Gastrocnemius medialis (tissue), 4 donors: ENCODE measurements at regions of chr7 and their contacts with region 1.

Region 1: GRCh38 chr7:96949766-96950165 is 55.6 kb upstream of the DLX6 start:
- DNase-seq: no peak
- ATAC-seq: no peak
- H3K4me3 ChIP-seq: no peak overlapping the region
- H3K27ac ChIP-seq: no peak overlapping the region
- H3K4me1 ChIP-seq: no peaks in the 10 kb centered on the region
- H3K27me3 ChIP-seq: no peaks in the 10 kb centered on the region
- CTCF ChIP-seq: no peak
- POLR2A ChIP-seq: no peak

Region 2: GRCh38 chr7:96327429-96327828 is 622.3 kb before region 1 on chr7:
- in situ Hi-C with region 1: no loop called
- intact Hi-C with region 1: no loop called
- DNase-seq: no peak
- ATAC-seq: no peak
- H3K4me3 ChIP-seq: no peak overlapping the region
- H3K27ac ChIP-seq: peak overlapping the region in 1 of 4 donors; percentile 22
- H3K4me1 ChIP-seq: peaks cover 11 to 12% of the 10 kb centered on the region in 2 donors
- H3K27me3 ChIP-seq: no peaks in the 10 kb centered on the region
- CTCF ChIP-seq: no peak
- POLR2A ChIP-seq: no peak

Region 3: GRCh38 chr7:96778263-96778662 is 171.5 kb before region 1 on chr7:
- in situ Hi-C with region 1: no loop called
- intact Hi-C with region 1: no loop called
- DNase-seq: no peak
- ATAC-seq: no peak
- H3K4me3 ChIP-seq: no peak overlapping the region
- H3K27ac ChIP-seq: no peak overlapping the region
- H3K4me1 ChIP-seq: no peaks in the 10 kb centered on the region
- H3K27me3 ChIP-seq: no peaks in the 10 kb centered on the region
- CTCF ChIP-seq: no peak
- POLR2A ChIP-seq: no peak

Region 4: DNA sequence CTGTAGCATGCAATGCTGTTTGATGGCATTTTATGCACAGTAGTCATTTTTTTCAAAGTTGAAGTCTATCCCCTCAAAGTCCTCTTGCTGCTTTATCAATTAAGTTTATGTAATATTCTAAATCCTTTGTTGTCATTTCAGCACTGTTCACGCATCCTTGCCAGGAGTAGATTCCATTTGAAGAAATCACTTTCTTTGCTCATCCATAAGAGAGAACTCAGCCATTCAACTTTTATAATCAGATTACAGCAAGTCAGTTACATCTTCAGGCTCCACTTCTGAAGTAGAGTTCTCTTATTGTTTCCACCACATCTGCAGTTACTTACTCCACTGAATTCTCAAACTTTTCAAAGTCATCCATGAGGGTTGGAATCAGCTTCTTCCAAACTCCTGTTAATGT is 200.1 kb after region 1 on chr7:
- in situ Hi-C with region 1: no loop called
- intact Hi-C with region 1: loop called (anchors 10 kb)
- DNase-seq: no peak
- ATAC-seq: no peak
- H3K4me3 ChIP-seq: no peak overlapping the region
- H3K27ac ChIP-seq: no peak overlapping the region
- H3K4me1 ChIP-seq: no peaks in the 10 kb centered on the region
- H3K27me3 ChIP-seq: no peaks in the 10 kb centered on the region
- CTCF ChIP-seq: no peak
- POLR2A ChIP-seq: no peak